Heart right ventricle (tissue), 16 donors: ENCODE measurements at regions of chr6 and their contacts with region 1.

Region 1: GRCh38 chr6:52489881-52490280 is 69.7 kb downstream of the EFHC1 start:
- DNase-seq: no peak
- ATAC-seq: peak in 3 of 8 donors; percentile 24 to 59 (median 35)
- H3K4me3 ChIP-seq: no peak overlapping the region
- H3K27ac ChIP-seq: peak overlapping the region in 3 of 10 donors; percentile 6 to 37 (median 27)
- H3K4me1 ChIP-seq: peaks cover 0 to 25% (median 6%) of the 10 kb centered on the region in 9 donors
- H3K27me3 ChIP-seq: no peaks in the 10 kb centered on the region
- CTCF ChIP-seq: no peak

Region 2: DNA sequence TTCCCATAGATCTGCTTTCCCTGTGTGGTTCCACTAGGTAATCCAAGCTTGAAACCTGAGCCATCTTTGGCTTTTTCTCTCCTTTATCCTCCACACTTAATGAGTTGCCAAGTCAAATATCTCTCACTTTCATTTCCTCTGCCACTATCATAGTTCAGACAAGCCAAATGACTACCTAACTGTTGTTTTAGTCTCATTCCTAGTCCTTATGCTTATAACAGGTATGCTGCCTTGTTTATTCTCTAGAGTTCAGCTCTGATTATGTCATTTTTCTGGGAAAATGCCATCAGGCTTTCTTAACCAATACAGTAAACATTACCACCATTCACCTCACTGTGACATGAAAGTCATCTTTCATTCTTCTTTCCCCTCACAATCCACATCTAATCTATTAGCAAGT is 63.2 kb before region 1 on chr6:
- intact Hi-C with region 1: loop called in 2 of 10 experiments (anchors 5 kb)
- DNase-seq: no peak
- ATAC-seq: no peak
- H3K4me3 ChIP-seq: no peak overlapping the region
- H3K27ac ChIP-seq: no peak overlapping the region
- H3K4me1 ChIP-seq: peaks cover 0 to 13% (median 4%) of the 10 kb centered on the region in 9 donors
- H3K27me3 ChIP-seq: no peaks in the 10 kb centered on the region
- CTCF ChIP-seq: no peak